ENCODE measurements at regions of chr13 and their contacts with region 1.

Region 1: DNA sequence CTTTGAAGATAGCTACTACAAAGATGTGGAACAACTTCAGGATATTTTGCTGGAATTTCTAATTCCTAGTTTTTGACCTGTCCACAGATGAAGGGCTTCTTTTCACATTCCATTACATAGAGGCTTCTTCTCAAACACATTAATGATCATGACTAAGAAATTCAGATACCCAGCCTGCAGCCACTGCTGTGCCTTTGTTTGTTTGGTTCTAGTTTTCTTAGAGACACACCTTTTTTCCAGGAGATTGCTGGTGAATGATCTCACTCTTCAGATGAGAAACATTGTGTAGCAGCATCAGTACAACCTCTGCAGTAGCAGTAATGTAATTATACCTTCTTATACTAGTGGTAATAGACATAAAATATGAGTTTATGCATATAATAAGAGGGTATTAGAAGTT is 5.0 kb downstream of the TDRD3 start:
- DNase-seq: no peak
- H3K4me3 ChIP-seq: no peak overlapping the region
- H3K27ac ChIP-seq: no peak overlapping the region
- H3K4me1 ChIP-seq: peaks cover 7% of the 10 kb centered on the region
- H3K27me3 ChIP-seq: no peaks in the 10 kb centered on the region
- CTCF ChIP-seq: no peak

Region 2: GRCh38 chr13:60163478-60164233 is 238.4 kb before region 1 on chr13 and contains the start of gene DIAPH3:
- intact Hi-C with region 1: loop called (anchors 10 kb)
- DNase-seq: peak; percentile 98
- H3K4me3 ChIP-seq: peak within 1 kb of the TSS; percentile 82
- H3K27ac ChIP-seq: peak within 1 kb of the TSS; percentile 88
- H3K4me1 ChIP-seq: no peaks in the 10 kb centered on the region
- H3K27me3 ChIP-seq: no peaks in the 10 kb centered on the region
- CTCF ChIP-seq: no peak
- total RNA-seq, gene DIAPH3: 5.1 to 14.5 TPM

Region 3: GRCh38 chr13:60435762-60436374 is 33.8 kb after region 1 on chr13:
- intact Hi-C with region 1: no loop called
- DNase-seq: no peak
- H3K4me3 ChIP-seq: no peak overlapping the region
- H3K27ac ChIP-seq: no peak overlapping the region
- H3K4me1 ChIP-seq: no peaks in the 10 kb centered on the region
- H3K27me3 ChIP-seq: no peaks in the 10 kb centered on the region
- CTCF ChIP-seq: no peak

Measured in colonic mucosa (tissue), 4 donors.